WTC11 (cell line): ENCODE measurements at regions of chr14 and their contacts with region 1.

Region 1: DNA sequence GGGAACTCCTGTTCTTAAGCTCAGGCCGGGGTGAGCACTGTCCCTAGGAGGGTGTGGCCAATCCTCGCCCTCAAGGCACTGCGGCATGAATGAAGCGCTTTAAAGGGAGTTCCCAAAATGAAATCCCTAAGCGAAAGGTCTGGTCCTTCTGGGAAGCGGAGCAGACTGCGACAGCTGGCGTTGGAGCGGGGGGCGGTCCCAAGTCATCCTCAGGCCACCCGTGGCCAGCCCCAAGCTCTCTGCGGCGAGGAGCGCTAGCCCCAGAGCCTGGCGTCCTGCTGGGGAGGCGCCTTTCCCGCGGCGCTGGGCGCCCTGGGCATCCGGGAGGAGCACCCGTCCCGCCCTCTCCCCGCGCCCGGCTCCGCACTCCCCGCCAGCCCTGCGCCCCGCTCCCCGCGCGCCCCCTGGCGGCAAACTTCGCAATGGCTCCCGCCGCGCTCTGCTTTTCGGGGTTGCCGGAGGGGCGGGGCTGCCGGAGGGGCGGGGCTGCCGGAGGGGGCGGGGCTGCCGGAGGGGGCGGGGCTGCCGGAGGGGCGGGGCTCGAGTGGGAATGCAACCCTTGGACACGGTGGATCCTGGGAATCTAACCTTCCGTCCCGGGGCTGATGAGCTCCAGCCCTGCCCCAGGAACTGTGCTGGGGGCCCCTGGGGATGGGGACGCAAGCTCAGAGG is 25.4 kb downstream of the ZBTB42 start:
- DNase-seq: peak; percentile 93
- ATAC-seq: peak; percentile 54
- H3K4me3 Mint-ChIP-seq: peak overlapping the region; percentile 80
- H3K27ac Mint-ChIP-seq: no peak overlapping the region
- H3K4me1 Mint-ChIP-seq: peaks cover 11% of the 10 kb centered on the region; the same call in 1 of the 2 replicates
- H3K27me3 Mint-ChIP-seq: peaks cover 34% of the 10 kb centered on the region
- CTCF ChIP-seq: peak; percentile 85

Region 2: GRCh38 chr14:104633276-104634137 is 192.8 kb before region 1 on chr14:
- CTCF ChIA-PET with region 1: no interaction called
- POLR2A ChIA-PET with region 1: no interaction called
- DNase-seq: no peak
- ATAC-seq: no peak
- H3K4me3 Mint-ChIP-seq: no peak overlapping the region
- H3K27ac Mint-ChIP-seq: no peak overlapping the region
- H3K4me1 Mint-ChIP-seq: no peaks in the 10 kb centered on the region
- H3K27me3 Mint-ChIP-seq: no peaks in the 10 kb centered on the region
- CTCF ChIP-seq: no peak

Region 3: DNA sequence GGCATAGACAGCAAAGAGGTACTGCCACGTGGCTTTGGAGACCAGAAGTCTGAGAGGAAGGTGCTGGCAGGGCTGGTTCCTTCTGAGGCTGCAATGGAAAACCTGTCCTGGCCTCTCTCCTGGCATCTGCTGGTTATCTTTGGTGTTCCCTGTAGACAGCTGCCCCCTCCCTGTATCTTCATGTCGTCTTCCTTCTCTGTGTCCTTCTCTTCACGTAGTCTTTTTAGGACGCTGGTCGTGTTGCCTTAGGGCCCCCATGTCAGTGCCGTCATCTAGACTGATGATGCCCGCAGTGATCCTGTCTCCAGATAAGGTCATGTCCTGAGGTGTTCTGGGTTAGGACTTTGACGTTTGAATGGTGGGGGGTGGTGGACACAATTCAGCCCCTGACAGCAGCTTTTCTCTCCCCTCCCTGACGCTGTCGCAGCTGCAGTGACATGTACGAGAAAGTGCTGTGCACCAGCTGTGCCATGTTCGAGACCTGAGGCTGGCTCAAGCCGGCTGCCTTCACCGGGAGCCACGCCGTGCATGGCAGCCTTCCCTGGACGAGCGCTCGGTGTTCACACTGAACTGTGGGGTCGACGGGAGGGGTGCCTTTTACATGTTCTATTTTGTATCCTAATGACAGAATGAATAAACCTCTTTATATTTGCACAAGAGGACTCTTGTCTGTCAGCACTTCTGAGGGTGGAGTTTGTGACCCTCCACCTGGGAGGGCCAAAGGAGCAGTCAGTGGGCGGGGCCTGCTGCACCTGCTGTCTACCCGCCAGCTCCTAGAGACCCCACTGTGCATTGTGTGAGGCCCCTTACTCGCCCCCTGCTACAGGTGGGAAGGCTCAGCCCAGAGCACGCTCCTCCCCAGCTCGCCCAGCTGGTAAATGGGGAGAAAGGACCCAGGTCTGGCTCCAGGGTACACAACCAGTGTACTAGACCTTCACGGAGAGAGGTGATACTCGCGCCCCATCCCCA is 67.0 kb before region 1 on chr14:
- CTCF ChIA-PET with region 1: interaction called, 12 read pairs
- POLR2A ChIA-PET with region 1: no interaction called
- DNase-seq: no peak
- ATAC-seq: no peak
- H3K4me3 Mint-ChIP-seq: no peak overlapping the region
- H3K27ac Mint-ChIP-seq: no peak overlapping the region
- H3K4me1 Mint-ChIP-seq: peaks cover 10% of the 10 kb centered on the region
- H3K27me3 Mint-ChIP-seq: no peaks in the 10 kb centered on the region; the same call in 1 of the 2 replicates
- CTCF ChIP-seq: no peak

Region 4: GRCh38 chr14:104794641-104795467 is 31.5 kb before region 1 on chr14:
- CTCF ChIA-PET with region 1: interaction called, 15 read pairs
- POLR2A ChIA-PET with region 1: no interaction called
- DNase-seq: no peak
- ATAC-seq: peak; percentile 5
- H3K4me3 Mint-ChIP-seq: peak overlapping the region; percentile 87
- H3K27ac Mint-ChIP-seq: peak overlapping the region; percentile 78
- H3K4me1 Mint-ChIP-seq: peaks cover 47% of the 10 kb centered on the region
- H3K27me3 Mint-ChIP-seq: peaks cover 39% of the 10 kb centered on the region
- CTCF ChIP-seq: no peak

Region 5: DNA sequence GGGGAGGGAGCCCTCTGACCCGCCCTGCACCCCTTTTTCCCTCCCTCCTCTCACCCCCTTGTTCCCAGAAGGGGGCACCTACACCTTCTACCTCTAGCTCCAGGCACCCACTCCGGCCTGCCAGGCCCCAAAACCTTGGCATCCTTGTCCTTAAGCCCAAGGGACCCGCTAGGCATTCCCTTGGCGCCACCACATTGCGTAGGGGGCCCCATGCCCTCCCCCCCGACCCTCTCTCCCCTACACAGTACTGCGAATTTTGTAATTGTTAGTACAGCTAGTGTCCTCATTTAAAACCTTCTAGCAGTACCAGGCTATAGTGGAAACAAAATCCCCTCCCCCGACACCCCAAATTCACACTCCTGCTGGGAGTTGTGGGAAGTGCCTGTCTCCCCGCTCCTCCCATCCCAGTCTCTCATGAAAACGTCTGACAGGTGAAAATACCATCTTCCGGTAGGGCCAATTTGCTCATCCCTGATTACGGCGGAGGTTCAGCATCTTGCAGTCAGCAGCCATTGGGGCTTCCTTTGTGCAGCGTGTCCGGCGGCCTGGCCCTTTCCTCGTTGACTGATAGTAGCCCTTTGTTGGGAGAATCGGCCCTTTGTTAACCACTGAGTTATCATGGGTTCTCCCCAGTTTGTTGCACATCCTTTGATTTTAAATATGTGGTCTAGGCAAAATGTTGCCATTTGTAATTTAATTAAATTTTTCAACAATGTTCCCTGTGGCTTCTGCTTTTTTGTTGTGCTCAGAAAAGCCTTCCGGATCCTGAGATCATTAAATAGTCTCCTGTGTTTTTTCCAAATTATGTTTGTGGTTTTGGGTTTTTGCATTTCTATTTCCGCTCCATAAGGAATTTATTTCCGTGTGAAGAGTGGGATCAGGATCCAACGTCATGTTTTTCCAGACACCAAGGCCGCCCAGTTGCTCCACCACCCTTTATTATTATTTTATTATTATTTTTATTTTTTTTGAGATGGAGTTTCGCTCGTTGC is 30.8 kb after region 1 on chr14:
- CTCF ChIA-PET with region 1: interaction called, 12 read pairs
- POLR2A ChIA-PET with region 1: no interaction called
- DNase-seq: no peak
- ATAC-seq: peak; percentile 60
- H3K4me3 Mint-ChIP-seq: no peak overlapping the region
- H3K27ac Mint-ChIP-seq: no peak overlapping the region
- H3K4me1 Mint-ChIP-seq: peaks cover 10% of the 10 kb centered on the region
- H3K27me3 Mint-ChIP-seq: peaks cover 12% of the 10 kb centered on the region
- CTCF ChIP-seq: no peak

Region 6: GRCh38 chr14:104895786-104896661 is 69.7 kb after region 1 on chr14:
- CTCF ChIA-PET with region 1: interaction called, 26 read pairs
- POLR2A ChIA-PET with region 1: interaction called, 3 read pairs
- DNase-seq: no peak
- ATAC-seq: no peak
- H3K4me3 Mint-ChIP-seq: no peak overlapping the region
- H3K27ac Mint-ChIP-seq: no peak overlapping the region
- H3K4me1 Mint-ChIP-seq: peaks cover 2% of the 10 kb centered on the region; the same call in 1 of the 2 replicates
- H3K27me3 Mint-ChIP-seq: no peaks in the 10 kb centered on the region; the same call in 1 of the 2 replicates
- CTCF ChIP-seq: no peak

Region 7: DNA sequence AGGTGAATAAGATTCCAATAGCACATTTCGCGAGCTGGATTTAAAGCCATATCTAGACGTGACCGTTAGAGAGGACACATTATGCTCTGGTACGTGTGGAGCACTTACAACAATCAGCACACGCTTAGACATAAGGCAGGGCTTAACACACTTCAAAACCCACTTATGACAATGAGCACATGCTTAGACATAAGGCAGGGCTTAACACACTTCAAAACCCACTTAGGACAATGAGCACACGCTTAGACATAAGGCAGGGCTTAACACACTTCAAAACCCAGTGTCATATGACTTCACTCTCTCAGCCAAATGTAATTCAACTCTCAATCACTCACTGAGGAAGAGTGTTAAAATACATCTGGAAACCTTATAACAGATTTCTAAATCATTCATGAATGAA is 87.1 kb after region 1 on chr14:
- CTCF ChIA-PET with region 1: no interaction called
- POLR2A ChIA-PET with region 1: no interaction called
- DNase-seq: no peak
- ATAC-seq: no peak
- H3K4me3 Mint-ChIP-seq: no peak overlapping the region
- H3K27ac Mint-ChIP-seq: no peak overlapping the region
- H3K4me1 Mint-ChIP-seq: no peaks in the 10 kb centered on the region
- H3K27me3 Mint-ChIP-seq: peaks cover 32% of the 10 kb centered on the region
- CTCF ChIP-seq: no peak